Right ventricle myocardium superior (tissue), 1 donor: ENCODE measurements at regions of chr11 and their contacts with region 1.

Region 1: GRCh38 chr11:73652046-73652730 is 5.8 kb downstream of the PLEKHB1 start:
- DNase-seq: no peak
- ATAC-seq: no peak

Region 2: GRCh38 chr11:73410627-73411026 is 241.6 kb before region 1 on chr11:
- intact Hi-C with region 1: loop called (anchors 2 kb)
- DNase-seq: no peak
- ATAC-seq: no peak